ENCODE measurements at regions of chr1 and their contacts with region 1.

Region 1: DNA sequence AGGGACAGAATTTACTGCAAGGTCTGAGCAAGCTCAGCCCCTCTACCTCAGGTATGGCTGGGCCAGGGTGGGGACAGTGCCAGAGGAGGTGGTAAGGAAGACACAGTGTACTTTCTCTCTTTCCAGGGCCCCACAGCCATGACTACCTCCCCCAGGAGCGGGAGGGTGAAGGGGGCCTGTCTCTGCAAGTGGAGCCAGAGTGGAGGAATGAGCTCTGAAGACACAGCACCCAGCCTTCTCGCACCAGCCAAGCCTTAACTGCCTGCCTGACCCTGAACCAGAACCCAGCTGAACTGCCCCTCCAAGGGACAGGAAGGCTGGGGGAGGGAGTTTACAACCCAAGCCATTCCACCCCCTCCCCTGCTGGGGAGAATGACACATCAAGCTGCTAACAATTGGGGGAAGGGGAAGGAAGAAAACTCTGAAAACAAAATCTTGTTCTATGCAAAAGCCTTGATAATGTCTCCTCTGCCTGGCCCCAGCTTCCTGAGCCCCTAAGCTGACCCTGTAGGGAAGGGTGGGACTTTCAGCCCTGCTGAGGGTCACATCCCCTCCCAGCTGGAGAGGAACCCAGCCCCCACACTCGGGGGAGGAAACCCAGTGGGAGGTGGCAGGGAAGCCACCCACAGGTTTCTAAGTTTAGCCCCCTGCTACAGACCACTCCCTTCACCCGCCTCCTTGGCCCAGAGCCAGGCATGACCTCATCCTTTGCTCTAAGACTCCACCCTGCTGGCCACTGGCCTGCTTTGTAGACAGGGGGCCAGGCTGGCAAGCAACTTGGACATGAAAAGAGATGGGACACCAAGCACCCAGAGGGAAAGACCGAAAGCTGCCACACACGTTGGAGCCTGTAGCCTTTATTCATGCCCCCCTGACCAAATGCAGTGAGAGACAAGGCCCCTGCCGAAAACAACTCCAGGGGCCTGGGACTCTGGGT is 6.4 kb downstream of the RHOC start:
- DNase-seq: peak; percentile 81 to 83
- H3K4me3 ChIP-seq: peak overlapping the region in 1 of 4 experiments; percentile 10; a peak in 2 of 8 replicates
- H3K27ac ChIP-seq: no peak overlapping the region
- H3K4me1 ChIP-seq: peaks cover 8 to 51% (median 28%) of the 10 kb centered on the region in 4 experiments
- H3K27me3 ChIP-seq: peaks cover 0 to 9% (median 2%) of the 10 kb centered on the region in 4 experiments; a peak in 2 of 7 replicates
- CTCF ChIP-seq: no peak
- EP300 ChIP-seq: no peak
- POLR2A ChIP-seq: no peak; a peak in 1 of 3 replicates
- RAD21 ChIP-seq: no peak; a peak in 1 of 4 replicates

Region 2: GRCh38 chr1:112688781-112689193 is 11.8 kb before region 1 on chr1:
- CTCF ChIA-PET with region 1: interaction called, 7 read pairs
- POLR2A ChIA-PET with region 1: interaction called, 32 read pairs
- DNase-seq: no peak
- H3K4me3 ChIP-seq: no peak overlapping the region
- H3K27ac ChIP-seq: no peak overlapping the region
- H3K4me1 ChIP-seq: peaks cover 0 to 2% (median 0%) of the 10 kb centered on the region in 4 experiments; a peak in 2 of 7 replicates
- H3K27me3 ChIP-seq: no peaks in the 10 kb centered on the region
- CTCF ChIP-seq: no peak
- EP300 ChIP-seq: no peak
- POLR2A ChIP-seq: no peak
- RAD21 ChIP-seq: no peak

Measured in H1 (cell line).